ENCODE measurements at regions of chr1 and their contacts with region 1.

Region 1: GRCh38 chr1:169893494-169894362 is at the start of gene SCYL3:
- DNase-seq: peak; percentile 96
- H3K4me3 Mint-ChIP-seq: peak within 1 kb of the TSS; percentile 84
- H3K27ac Mint-ChIP-seq: peak within 1 kb of the TSS; percentile 99
- H3K4me1 Mint-ChIP-seq: peaks cover 44% of the 10 kb centered on the region
- H3K27me3 Mint-ChIP-seq: peaks cover 14% of the 10 kb centered on the region
- total RNA-seq, gene SCYL3: 10.8 and 11.9 TPM in 2 replicates

Region 2: DNA sequence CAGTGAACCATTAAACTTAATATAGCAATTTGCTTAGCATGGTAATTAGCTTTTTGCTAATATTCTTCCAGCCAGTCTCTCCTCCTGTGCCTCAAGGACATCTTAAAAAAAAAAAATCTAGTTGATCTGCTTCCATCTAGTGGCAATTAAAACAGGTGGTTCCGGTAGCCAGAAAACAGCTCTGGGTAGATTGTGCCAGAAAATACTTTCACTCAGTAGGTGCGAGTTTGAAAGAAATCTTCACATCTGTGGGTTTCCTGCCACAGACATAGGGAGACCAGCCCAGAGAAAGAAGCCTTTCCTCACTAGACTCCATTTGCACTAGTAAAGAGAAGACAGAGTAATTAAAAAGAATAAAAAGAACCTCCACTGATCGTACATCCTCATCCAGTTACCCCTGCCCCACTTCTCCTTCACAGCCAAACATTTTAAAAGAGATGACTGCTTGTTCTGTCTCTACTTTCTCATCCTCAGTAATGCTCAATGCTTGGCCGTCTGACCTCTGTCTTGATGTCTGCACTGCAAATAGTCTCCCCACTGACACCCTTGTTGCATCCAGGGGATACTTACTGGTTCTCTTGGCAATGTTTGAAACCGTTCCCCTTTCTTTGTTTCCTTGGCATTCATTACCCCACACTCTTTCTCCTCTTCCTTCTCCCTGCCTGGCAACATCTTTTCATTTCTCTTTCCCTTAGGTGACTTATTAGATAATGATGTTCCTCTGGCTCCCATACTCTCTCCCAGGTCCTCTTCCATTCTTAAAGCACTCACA is 199.2 kb before region 1 on chr1:
- intact Hi-C with region 1: loop called (anchors 5 kb)
- DNase-seq: peak; percentile 88
- H3K4me3 Mint-ChIP-seq: peak overlapping the region; percentile 26
- H3K27ac Mint-ChIP-seq: peak overlapping the region; percentile 79
- H3K4me1 Mint-ChIP-seq: peaks cover 84% of the 10 kb centered on the region
- H3K27me3 Mint-ChIP-seq: no peaks in the 10 kb centered on the region

Region 3: GRCh38 chr1:169794530-169795416 is 99.0 kb before region 1 on chr1 and contains the start of gene METTL18:
- intact Hi-C with region 1: loop called (anchors 1 kb)
- DNase-seq: peak; percentile 98
- H3K4me3 Mint-ChIP-seq: peak within 1 kb of the TSS; percentile 99
- H3K27ac Mint-ChIP-seq: peak within 1 kb of the TSS; percentile 97
- H3K4me1 Mint-ChIP-seq: peaks cover 45% of the 10 kb centered on the region
- H3K27me3 Mint-ChIP-seq: no peaks in the 10 kb centered on the region
- total RNA-seq, gene METTL18: 9.3 and 10.3 TPM in 2 replicates

Region 4: DNA sequence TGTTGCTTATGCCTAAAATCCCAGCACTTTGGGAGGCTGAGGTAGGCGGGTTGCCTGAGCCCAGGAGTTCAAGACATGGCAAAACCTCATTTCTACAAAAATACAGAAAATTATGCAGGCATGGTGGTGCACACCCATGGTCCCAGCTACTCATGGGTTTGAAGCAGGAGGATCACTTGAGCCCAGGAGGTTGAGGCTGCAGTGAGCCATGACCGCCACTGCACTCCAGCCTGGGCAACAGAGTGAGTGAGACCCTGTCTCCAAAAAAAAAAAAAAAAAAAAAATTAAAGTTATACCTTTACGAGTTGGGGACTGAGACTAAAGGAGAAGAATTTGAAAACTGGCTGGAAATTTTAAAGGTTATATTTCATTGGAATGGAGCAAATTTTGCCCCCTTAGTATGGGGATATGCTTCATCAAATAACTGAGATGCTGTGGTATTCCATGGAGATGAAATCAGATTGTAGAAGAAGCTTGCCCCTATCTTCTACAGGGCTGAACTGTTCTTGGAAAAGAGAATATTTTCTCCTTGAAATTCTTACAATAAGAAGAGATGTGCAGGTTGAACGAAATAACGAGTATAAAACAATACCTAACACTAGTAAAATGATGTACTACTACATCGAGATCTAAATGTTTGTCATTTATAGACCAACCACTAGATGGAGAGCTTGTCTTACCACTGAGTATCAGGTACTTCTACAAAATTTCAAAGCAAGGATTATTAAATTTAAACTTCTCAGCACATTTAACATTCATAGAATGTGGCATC is 34.9 kb after region 1 on chr1:
- intact Hi-C with region 1: loop called (anchors 2 kb)
- DNase-seq: peak; percentile 37
- H3K4me3 Mint-ChIP-seq: no peak overlapping the region
- H3K27ac Mint-ChIP-seq: no peak overlapping the region
- H3K4me1 Mint-ChIP-seq: peaks cover 6% of the 10 kb centered on the region
- H3K27me3 Mint-ChIP-seq: peaks cover 7% of the 10 kb centered on the region

Region 5: DNA sequence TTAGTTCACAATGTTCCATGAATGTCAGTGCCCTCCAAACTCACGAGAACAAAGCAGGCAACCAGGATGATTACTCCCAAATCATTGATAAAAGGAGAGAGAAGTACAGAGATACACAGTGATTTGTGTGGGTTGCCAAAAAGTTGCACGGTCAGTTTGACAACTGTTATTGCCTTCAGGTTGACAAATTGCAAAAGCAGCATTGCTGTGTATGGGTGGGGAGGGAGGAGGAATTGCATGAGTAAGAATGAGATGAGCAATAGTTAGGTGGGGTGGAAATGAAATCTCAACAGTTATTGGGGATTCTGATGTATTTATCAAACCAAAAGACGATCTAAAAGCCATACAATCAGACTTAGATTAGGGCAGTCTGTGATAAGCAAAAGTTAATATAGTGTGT is 345.7 kb after region 1 on chr1:
- intact Hi-C with region 1: no loop called
- DNase-seq: no peak
- H3K4me3 Mint-ChIP-seq: no peak overlapping the region
- H3K27ac Mint-ChIP-seq: no peak overlapping the region
- H3K4me1 Mint-ChIP-seq: no peaks in the 10 kb centered on the region
- H3K27me3 Mint-ChIP-seq: peaks cover 1% of the 10 kb centered on the region

Region 6: DNA sequence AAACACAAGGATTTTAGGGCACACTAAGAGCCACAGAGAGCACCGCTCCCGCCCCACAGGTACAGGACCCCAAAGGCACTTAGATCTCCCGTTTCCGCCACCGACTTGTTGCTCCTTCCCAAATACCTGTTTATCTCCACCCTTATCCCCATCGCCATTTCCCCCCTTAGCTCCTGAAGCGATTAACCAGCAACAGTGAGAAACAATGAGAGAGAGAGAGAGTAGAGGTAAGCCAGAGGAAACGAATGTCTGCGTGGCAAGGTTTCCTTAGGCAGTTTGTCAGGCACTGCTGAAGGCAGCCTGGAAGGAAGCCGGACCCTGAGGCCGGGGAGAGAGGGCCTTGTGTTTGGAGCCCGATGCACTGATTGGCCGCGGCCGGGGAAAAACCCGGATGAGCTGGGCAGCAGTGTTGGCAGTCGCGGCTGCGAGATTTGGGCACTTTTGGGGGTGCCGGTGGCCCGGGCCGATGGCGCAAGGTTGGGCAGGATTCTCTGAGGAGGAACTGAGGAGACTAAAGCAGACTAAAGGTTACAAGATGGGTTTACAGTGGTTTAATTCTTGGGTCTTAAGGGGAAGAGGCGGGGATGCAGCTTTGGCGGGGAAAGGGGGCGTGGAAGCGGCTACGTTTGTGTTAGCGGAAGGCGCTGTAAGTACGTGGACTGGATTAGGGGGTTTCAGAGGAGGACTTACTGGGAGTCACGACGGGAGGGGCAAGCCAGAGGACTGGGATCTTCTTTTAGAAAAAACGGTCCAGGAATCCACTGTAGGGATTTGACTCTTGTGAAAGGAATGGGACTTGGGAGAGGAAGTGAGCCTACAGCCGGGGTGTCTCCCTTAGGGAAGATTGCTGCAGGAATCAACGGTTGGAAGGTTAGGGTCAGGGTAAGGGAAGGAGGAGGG is 638.3 kb after region 1 on chr1 and contains the start of gene GORAB:
- intact Hi-C with region 1: loop called (anchors 5 kb)
- DNase-seq: peak; percentile 96
- H3K4me3 Mint-ChIP-seq: no peak within 1 kb of the TSS
- H3K27ac Mint-ChIP-seq: no peak within 1 kb of the TSS
- H3K4me1 Mint-ChIP-seq: peaks cover 5% of the 10 kb centered on the region
- H3K27me3 Mint-ChIP-seq: peaks cover 13% of the 10 kb centered on the region
- total RNA-seq, gene GORAB: 12.8 and 13.0 TPM in 2 replicates

Region 7: DNA sequence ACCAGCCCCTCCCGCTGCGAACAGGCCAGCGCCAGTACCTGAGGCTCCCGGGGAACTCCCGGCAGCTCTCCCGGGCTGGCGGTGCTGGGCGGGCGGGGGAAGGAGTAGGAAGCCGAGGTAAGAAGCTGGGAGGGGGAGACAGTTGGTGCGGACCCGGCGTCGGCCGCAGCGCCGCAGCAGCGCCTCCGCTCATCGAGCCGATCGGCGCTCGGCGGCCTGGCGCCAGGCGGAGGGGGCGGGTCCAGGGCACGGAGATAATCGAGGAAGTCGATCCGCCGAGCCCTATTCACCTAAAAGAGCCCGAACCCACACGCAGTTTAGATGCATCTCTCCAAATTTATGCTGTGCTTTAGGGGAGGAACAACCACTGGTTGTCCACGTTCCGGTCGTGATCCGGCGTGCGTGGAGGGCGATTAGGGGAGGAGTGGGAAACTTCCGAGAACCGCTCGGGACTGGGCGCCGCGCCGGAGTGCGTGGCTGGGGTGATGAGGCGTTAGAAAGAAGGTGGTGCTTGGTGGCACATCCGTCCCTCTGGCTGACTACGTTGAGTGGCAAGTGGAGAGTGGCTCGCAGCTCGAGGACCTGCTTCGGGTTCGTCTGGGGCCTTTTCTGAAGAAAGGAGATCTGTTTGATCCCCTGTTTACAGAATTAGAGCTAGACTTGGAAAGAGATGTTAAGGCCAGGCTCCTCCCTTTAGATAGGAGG is 1848.3 kb after region 1 on chr1 and contains the start of gene VAMP4:
- intact Hi-C with region 1: loop called (anchors 5 kb)
- DNase-seq: peak; percentile 95
- H3K4me3 Mint-ChIP-seq: peak within 1 kb of the TSS; percentile 100
- H3K27ac Mint-ChIP-seq: peak within 1 kb of the TSS; percentile 100
- H3K4me1 Mint-ChIP-seq: peaks cover 51% of the 10 kb centered on the region
- H3K27me3 Mint-ChIP-seq: no peaks in the 10 kb centered on the region
- total RNA-seq, gene VAMP4: 7.7 TPM in 2 replicates

Measured in activated CD4-positive, alpha-beta T cell treated with anti-CD3 and anti-CD28 coated beads, Interleukin-2, amount 10 ng/mL, durations not matched to agents 24 days and 14 days (primary cell).